CD4-positive, alpha-beta memory T cell (primary cell): ENCODE measurements at regions of chr12 and their contacts with region 1.

Region 1: DNA sequence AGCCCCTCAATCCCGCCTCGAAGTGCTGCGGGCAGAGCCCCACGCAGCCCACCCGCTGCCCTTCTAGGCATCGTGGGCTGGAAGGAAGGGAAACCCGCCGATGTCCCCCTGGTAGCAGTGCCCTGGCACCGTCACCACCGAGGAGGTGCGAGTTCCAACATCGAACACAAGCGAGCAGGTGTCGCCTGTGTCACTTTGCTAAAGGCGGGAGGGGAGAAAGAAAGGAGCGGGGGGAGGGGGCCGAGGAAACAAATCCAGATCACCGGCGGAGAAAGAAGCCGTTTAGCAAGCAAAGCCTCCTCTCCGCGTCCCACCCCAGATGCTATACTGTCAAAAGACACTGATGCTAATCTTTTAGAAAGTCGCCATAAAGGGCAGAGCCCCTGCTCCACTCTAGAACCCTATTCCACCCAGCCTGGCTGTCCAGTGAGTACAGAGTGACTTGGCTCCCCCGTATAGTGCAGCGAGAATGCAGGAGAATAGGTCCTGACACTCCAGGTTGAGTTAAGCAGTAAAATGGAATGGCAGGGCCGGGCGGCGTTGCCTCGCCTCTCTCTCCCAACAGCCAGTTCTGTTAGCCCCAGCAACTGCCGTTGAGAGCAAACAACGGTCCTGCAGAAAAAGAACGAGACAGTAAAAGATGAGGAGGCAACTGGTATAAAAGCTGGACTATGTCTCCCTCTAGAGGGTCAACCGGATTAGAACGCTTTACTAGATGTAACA is 67.9 kb upstream of the USP15 start:
- DNase-seq: peak; percentile 58 to 75 (median 66)
- H3K4me3 ChIP-seq: peak overlapping the region; percentile 37 to 43
- H3K4me3 Mint-ChIP-seq: peak overlapping the region; percentile 81 to 92 (median 87)
- H3K27ac ChIP-seq: no peak overlapping the region
- H3K27ac Mint-ChIP-seq: peak overlapping the region in 3 of 7 donors; percentile 9 to 48 (median 43)
- H3K4me1 ChIP-seq: peaks cover 23% of the 10 kb centered on the region
- H3K4me1 Mint-ChIP-seq: peaks cover 13 to 30% (median 22%) of the 10 kb centered on the region in 4 donors
- H3K27me3 ChIP-seq: peaks cover 26% of the 10 kb centered on the region
- H3K27me3 Mint-ChIP-seq: peaks cover 28 to 35% of the 10 kb centered on the region in 2 donors

Region 2: DNA sequence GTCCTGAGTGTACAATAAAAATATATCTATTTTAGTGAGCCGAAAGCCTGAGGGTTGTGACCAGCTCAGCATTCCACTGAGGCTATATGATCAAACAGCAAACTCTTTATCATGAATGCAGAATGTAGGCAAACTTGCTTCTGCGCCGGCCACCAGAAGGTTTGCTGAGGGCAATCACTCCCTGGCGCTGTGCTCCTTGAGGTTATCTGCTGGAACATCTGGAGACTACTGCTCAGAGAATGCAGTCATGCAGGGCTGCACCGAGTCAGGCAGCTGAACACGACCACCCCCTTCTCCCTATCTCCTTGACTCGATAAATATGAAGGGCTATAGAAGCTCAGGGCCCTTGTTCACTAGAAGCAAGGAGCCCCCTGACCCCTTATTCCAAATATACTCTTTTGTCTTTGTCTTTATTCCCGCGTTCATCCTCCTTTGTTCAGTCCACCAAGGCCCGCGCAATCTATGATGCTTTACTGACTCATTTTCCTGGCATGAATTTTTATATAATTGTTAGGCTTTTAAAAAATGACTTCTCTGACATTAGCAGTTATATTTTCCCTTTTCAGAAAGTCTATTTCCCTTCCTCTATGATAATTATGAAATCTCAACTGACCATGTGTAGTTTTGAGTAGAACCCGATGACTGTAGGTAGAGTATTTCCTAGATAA is 1507.2 kb before region 1 on chr12:
- CTCF ChIA-PET with region 1: no interaction called
- POLR2A ChIA-PET with region 1: no interaction called
- intact Hi-C with region 1: loop called (anchors 2 kb)
- DNase-seq: no peak
- H3K4me3 ChIP-seq: no peak overlapping the region
- H3K4me3 Mint-ChIP-seq: no peak overlapping the region
- H3K27ac ChIP-seq: no peak overlapping the region
- H3K27ac Mint-ChIP-seq: no peak overlapping the region
- H3K4me1 ChIP-seq: no peaks in the 10 kb centered on the region
- H3K4me1 Mint-ChIP-seq: no peaks in the 10 kb centered on the region
- H3K27me3 ChIP-seq: no peaks in the 10 kb centered on the region
- H3K27me3 Mint-ChIP-seq: no peaks in the 10 kb centered on the region

Region 3: DNA sequence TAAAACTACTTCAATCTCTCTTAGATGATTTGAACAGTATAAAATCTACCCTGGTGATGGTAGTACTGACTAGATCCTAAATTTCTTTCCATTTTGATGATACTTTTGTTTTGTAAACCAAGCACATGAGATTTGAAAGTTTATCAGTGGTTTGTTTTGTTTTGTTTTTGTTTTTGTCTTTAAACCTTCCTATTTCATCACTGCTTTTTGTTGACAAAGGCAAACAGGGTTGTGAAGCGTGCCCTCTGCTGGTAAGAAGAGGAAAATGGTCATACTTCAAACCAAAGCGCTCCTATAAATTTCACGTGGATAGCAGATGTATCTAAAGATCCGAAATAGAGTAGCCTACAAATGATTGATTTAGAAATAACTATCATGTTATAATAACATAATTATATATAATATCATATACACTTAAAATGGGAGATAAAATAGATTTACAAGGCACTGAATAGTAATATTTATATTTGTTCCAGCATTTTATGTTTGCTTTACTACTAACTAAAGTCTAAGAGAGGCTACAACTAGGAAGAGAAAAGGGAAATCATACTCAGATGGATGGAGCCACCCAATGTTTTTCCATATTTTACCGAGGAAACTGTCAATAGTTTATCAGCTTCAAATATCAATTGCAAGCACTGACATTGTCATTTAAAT is 186.1 kb before region 1 on chr12:
- CTCF ChIA-PET with region 1: interaction called, 4 read pairs
- POLR2A ChIA-PET with region 1: no interaction called
- intact Hi-C with region 1: loop called (anchors 1 kb)
- DNase-seq: peak in 3 of 5 donors; percentile 3 to 18 (median 6)
- H3K4me3 ChIP-seq: no peak overlapping the region
- H3K4me3 Mint-ChIP-seq: no peak overlapping the region
- H3K27ac ChIP-seq: no peak overlapping the region
- H3K27ac Mint-ChIP-seq: no peak overlapping the region
- H3K4me1 ChIP-seq: no peaks in the 10 kb centered on the region
- H3K4me1 Mint-ChIP-seq: no peaks in the 10 kb centered on the region
- H3K27me3 ChIP-seq: no peaks in the 10 kb centered on the region
- H3K27me3 Mint-ChIP-seq: peaks cover 0 to 2% of the 10 kb centered on the region in 2 donors

Region 4: DNA sequence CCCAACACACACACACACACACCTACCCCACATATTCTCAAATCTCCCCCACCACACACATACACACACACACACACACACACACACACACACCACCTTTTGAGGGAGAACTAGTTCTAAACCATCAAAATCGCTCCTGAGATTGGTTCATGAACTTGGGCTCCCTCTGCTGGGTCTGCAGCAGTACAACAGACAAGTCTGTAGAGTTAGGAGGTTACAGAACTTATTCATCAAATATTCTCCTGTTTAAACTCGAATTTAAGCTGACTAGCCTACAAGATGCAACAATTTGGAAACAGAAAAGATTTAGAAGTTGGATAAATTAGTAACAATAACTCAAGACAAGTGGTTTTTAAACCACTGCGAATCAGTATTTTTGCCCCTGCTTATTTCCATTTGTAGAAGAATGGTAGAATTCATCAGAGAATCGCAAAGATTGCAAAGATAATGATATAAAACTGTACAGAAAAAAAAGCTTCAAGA is 68.6 kb before region 1 on chr12:
- CTCF ChIA-PET with region 1: interaction called, 3 read pairs
- POLR2A ChIA-PET with region 1: interaction called, 3 read pairs
- intact Hi-C with region 1: loop called (anchors 1 kb)
- DNase-seq: peak in 4 of 5 donors; percentile 3 to 27 (median 16)
- H3K4me3 ChIP-seq: no peak overlapping the region
- H3K4me3 Mint-ChIP-seq: no peak overlapping the region
- H3K27ac ChIP-seq: no peak overlapping the region
- H3K27ac Mint-ChIP-seq: peak overlapping the region in 1 of 7 donors; percentile 38
- H3K4me1 ChIP-seq: no peaks in the 10 kb centered on the region
- H3K4me1 Mint-ChIP-seq: peaks cover 0 to 4% (median 2%) of the 10 kb centered on the region in 4 donors
- H3K27me3 ChIP-seq: no peaks in the 10 kb centered on the region
- H3K27me3 Mint-ChIP-seq: peaks cover 0 to 4% of the 10 kb centered on the region in 2 donors

Region 5: DNA sequence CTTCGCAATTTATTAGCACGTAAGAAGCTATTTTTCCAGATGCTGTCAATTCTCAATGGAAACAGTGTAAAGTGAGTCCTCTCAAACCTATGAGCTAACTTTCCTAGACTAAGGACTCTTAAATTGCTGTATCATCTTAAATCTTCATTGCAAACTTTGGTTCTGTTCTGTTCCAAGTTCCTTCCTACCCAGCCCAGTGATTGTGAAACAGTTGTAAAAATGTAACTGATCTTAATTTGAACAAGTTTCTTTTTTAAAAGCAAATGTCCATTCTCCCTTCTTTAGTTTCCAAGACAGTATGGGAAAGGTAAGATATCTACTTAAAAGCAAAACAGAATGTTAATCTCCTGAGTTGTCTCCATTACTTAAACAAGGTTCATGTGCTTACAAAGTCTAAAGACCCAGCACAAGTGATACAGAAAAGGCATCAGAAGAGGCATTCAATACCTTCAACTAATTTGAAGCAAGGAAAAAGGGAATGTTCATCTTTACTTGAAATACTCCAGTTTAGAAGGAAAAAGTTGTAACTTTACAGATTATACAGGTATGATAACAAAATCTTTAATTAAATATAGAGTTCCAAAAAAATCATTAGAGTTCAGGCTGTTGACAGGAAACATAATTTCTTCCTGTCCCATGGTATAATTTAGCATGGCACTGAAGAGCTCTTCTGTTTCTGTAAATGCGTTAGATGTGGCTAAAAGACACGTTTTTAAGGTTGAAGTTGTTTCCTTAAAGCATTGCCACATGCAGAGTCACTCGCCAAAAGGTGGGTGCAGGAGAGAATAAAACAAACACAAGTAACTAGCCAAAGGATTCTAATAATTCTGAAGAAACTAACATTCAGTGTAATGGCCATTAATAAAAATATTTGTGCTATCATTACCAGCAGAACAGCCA is 33.6 kb before region 1 on chr12:
- CTCF ChIA-PET with region 1: no interaction called
- POLR2A ChIA-PET with region 1: no interaction called
- intact Hi-C with region 1: no loop called
- DNase-seq: peak in 4 of 5 donors; percentile 16 to 32 (median 19)
- H3K4me3 ChIP-seq: no peak overlapping the region
- H3K4me3 Mint-ChIP-seq: peak overlapping the region in 6 of 8 donors; percentile 14 to 65 (median 41)
- H3K27ac ChIP-seq: no peak overlapping the region
- H3K27ac Mint-ChIP-seq: peak overlapping the region in 5 of 7 donors; percentile 7 to 65 (median 30)
- H3K4me1 ChIP-seq: peaks cover 6% of the 10 kb centered on the region
- H3K4me1 Mint-ChIP-seq: peaks cover 8 to 29% (median 11%) of the 10 kb centered on the region in 4 donors
- H3K27me3 ChIP-seq: no peaks in the 10 kb centered on the region
- H3K27me3 Mint-ChIP-seq: peaks cover 3 to 5% of the 10 kb centered on the region in 2 donors

Region 6: GRCh38 chr12:62210422-62210821 is 18.1 kb after region 1 on chr12:
- CTCF ChIA-PET with region 1: interaction called, 10 read pairs
- POLR2A ChIA-PET with region 1: no interaction called
- intact Hi-C with region 1: no loop called
- DNase-seq: peak in 4 of 5 donors; percentile 19 to 34 (median 29)
- H3K4me3 ChIP-seq: no peak overlapping the region
- H3K4me3 Mint-ChIP-seq: no peak overlapping the region
- H3K27ac ChIP-seq: no peak overlapping the region
- H3K27ac Mint-ChIP-seq: peak overlapping the region in 1 of 7 donors; percentile 33
- H3K4me1 ChIP-seq: peaks cover 11% of the 10 kb centered on the region
- H3K4me1 Mint-ChIP-seq: peaks cover 0 to 18% (median 6%) of the 10 kb centered on the region in 4 donors
- H3K27me3 ChIP-seq: no peaks in the 10 kb centered on the region
- H3K27me3 Mint-ChIP-seq: peaks cover 9 to 10% of the 10 kb centered on the region in 2 donors